GM12878 (cell line): ENCODE measurements at regions of chr10 and their contacts with region 1.

Region 1: GRCh38 chr10:110326351-110327032 is 21.8 kb upstream of the SMNDC1 start:
- DNase-seq: peak; percentile 51
- ATAC-seq: peak; percentile 49
- H3K4me3 ChIP-seq: no peak overlapping the region
- H3K27ac ChIP-seq: peak overlapping the region; percentile 79
- H3K4me1 ChIP-seq: peaks cover 39% of the 10 kb centered on the region
- H3K27me3 ChIP-seq: no peaks in the 10 kb centered on the region
- CTCF ChIP-seq: no peak
- EP300 ChIP-seq: peak in 1 of 2 experiments; percentile 60; a peak in 1 of 4 replicates
- POLR2A ChIP-seq: no peak
- RAD21 ChIP-seq: no peak

Region 2: GRCh38 chr10:110344622-110345021 is 18.1 kb after region 1 on chr10:
- CTCF ChIA-PET with region 1: interaction called, 7 read pairs
- POLR2A ChIA-PET with region 1: interaction called, 7 read pairs
- RAD21 ChIA-PET with region 1: interaction called, 7 read pairs
- SMC1A ChIA-PET with region 1: interaction called, 29 read pairs
- in situ Hi-C with region 1: no loop called
- intact Hi-C with region 1: no loop called
- DNase-seq: no peak
- ATAC-seq: no peak
- H3K4me3 ChIP-seq: no peak overlapping the region
- H3K27ac ChIP-seq: no peak overlapping the region
- H3K4me1 ChIP-seq: no peaks in the 10 kb centered on the region
- H3K27me3 ChIP-seq: no peaks in the 10 kb centered on the region
- CTCF ChIP-seq: no peak
- EP300 ChIP-seq: no peak
- POLR2A ChIP-seq: no peak
- RAD21 ChIP-seq: no peak